ENCODE measurements at regions of chr17 and their contacts with region 1.

Region 1: DNA sequence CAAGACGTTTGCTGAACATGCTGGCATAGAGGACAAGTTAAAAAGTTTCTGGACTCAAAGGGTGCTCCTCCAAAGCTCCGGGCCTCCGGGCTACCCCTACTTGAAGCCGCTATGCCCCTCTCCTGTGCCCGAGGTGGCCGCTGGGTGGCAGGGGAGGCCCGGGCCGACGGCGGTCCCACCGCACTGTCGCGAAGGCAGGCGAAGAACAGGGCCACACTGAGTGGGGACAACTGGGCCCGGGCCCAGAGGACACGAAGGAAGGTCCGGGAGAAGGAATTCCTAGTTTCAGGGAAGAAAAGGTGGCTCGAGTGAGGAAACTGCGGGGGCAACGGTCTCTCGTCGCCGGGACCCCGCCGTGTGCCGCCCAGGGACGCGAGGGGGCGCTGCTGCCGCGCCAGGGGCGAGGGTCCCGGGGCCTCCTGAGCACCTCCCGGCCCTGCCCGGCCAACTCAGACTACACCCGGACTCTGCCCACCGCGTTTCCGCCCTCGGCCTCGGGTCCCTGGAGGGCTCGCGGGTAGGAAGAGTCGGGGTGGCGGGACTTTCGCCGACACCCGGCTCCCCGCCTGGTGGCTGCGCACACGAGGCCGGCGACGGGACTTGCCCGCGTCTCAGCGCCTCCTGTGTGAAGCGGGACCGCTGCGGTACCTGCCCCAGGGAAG is 885 bp upstream of the CHCT1 start:
- DNase-seq: peak; percentile 60 to 73 (median 70)
- H3K4me3 ChIP-seq: peak overlapping the region; percentile 52 to 66
- H3K4me3 Mint-ChIP-seq: peak overlapping the region; percentile 72 to 88 (median 80)
- H3K27ac ChIP-seq: peak overlapping the region; percentile 16
- H3K27ac Mint-ChIP-seq: peak overlapping the region in 6 of 7 donors; percentile 57 to 80 (median 68)
- H3K4me1 ChIP-seq: peaks cover 7% of the 10 kb centered on the region
- H3K4me1 Mint-ChIP-seq: peaks cover 5 to 10% (median 7%) of the 10 kb centered on the region in 4 donors
- H3K27me3 ChIP-seq: no peaks in the 10 kb centered on the region
- H3K27me3 Mint-ChIP-seq: no peaks in the 10 kb centered on the region

Region 2: DNA sequence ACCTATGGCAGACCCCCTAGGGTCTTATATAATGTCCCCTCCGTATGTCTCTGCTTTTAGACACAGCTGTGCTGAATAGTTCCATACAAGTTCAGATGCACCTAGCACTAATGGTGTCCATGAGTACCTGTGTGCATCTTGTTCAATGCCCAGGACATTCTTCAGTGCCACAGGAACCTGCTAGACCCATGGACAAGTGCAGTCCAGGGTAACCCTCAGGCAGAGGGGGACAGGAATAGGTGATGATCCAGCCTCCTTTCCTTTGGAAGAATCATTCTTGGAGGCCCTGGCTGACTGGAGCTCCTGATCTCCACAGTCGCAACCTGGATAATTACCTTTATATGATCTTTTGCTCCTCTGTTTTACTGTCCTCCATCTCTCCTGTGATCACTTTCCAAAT is 150.1 kb after region 1 on chr17:
- CTCF ChIA-PET with region 1: interaction called, 4 read pairs
- POLR2A ChIA-PET with region 1: no interaction called
- intact Hi-C with region 1: loop called (anchors 2 kb)
- DNase-seq: no peak
- H3K4me3 ChIP-seq: no peak overlapping the region
- H3K4me3 Mint-ChIP-seq: no peak overlapping the region
- H3K27ac ChIP-seq: no peak overlapping the region
- H3K27ac Mint-ChIP-seq: no peak overlapping the region
- H3K4me1 ChIP-seq: no peaks in the 10 kb centered on the region
- H3K4me1 Mint-ChIP-seq: peaks cover 0 to 1% (median 0%) of the 10 kb centered on the region in 4 donors
- H3K27me3 ChIP-seq: no peaks in the 10 kb centered on the region
- H3K27me3 Mint-ChIP-seq: peaks cover 2% of the 10 kb centered on the region in 2 donors

Region 3: GRCh38 chr17:60590070-60590469 is 168.7 kb after region 1 on chr17:
- CTCF ChIA-PET with region 1: no interaction called
- POLR2A ChIA-PET with region 1: no interaction called
- intact Hi-C with region 1: no loop called
- DNase-seq: no peak
- H3K4me3 ChIP-seq: no peak overlapping the region
- H3K4me3 Mint-ChIP-seq: no peak overlapping the region
- H3K27ac ChIP-seq: no peak overlapping the region
- H3K27ac Mint-ChIP-seq: no peak overlapping the region
- H3K4me1 ChIP-seq: no peaks in the 10 kb centered on the region
- H3K4me1 Mint-ChIP-seq: no peaks in the 10 kb centered on the region
- H3K27me3 ChIP-seq: no peaks in the 10 kb centered on the region
- H3K27me3 Mint-ChIP-seq: peaks cover 2 to 3% of the 10 kb centered on the region in 2 donors

Measured in CD4-positive, alpha-beta memory T cell (primary cell).